Activated CD8-positive, alpha-beta T cell treated with anti-CD3 and anti-CD28 coated beads for 36 hours (primary cell): ENCODE measurements at regions of chr1 and their contacts with region 1.

Region 1: GRCh38 chr1:116769561-116769977 is 15.3 kb downstream of the CD2 start:
- DNase-seq: peak; percentile 89
- ATAC-seq: peak; percentile 56
- H3K4me3 Mint-ChIP-seq: peak overlapping the region; percentile 98
- H3K27ac Mint-ChIP-seq: peak overlapping the region; percentile 99
- H3K4me1 Mint-ChIP-seq: peaks cover 92% of the 10 kb centered on the region
- H3K27me3 Mint-ChIP-seq: no peaks in the 10 kb centered on the region
- CTCF ChIP-seq: no peak

Region 2: DNA sequence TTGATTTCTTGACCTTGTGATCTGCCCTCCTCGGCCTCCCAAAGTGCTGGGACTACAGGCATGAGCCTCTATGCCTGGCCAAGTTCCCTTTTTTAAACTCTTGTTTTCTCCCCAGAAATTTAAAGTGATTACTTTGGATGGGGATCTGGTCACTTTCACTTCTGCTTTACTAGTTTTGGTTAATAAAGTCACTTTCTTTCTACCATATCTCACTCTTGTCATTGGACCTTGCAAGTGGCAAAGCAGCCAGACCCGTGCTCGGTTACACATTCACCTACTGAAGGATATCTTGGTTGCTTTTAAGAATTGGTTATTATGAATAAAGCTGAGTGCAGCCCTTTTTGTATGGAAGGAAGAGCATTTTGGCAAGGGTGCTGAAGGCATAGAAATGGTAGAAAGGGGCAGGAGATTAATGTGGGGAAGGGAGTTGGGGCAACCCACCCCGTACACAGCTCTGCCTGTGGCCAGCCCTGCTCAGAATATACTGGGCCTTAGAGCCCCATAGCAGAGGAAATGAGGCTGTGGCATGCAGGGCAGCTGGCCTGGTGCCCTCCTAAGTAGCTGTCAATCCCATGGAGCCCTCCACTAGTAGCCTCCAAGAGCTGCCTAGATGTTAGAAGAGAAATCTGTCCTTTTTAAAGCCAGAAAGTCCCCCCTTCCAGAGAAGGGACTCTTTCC is 25.4 kb after region 1 on chr1:
- CTCF ChIA-PET with region 1: interaction called, 5 read pairs
- POLR2A ChIA-PET with region 1: interaction called, 520 read pairs
- intact Hi-C with region 1: no loop called
- DNase-seq: no peak
- ATAC-seq: no peak
- H3K4me3 Mint-ChIP-seq: no peak overlapping the region
- H3K27ac Mint-ChIP-seq: peak overlapping the region; percentile 11
- H3K4me1 Mint-ChIP-seq: peaks cover 63% of the 10 kb centered on the region
- H3K27me3 Mint-ChIP-seq: no peaks in the 10 kb centered on the region
- CTCF ChIP-seq: no peak

Region 3: DNA sequence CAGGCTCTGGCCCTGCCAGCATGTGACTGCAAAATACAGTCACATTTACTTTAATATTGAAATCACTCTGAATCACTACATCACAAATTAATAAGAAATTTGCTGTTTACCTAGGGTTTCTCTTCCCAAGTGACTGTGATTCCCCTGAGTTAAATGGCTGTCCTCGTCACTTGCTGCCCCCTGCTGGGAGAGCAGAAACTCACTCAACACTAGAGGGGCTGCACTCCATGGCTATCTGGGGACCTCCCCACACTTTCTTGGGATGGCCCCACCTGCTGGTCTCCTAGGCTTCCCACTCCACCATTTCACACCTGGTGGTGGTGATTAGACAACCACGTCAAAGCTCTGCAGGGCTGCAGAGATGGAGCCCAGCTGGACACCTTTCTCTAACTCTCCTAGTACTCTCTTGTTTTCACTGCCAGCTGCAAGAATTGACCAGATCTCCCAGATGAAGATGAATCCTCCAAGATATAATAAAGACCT is 48.1 kb after region 1 on chr1:
- CTCF ChIA-PET with region 1: interaction called, 167 read pairs
- POLR2A ChIA-PET with region 1: interaction called, 217 read pairs
- intact Hi-C with region 1: loop called (anchors 1 kb)
- DNase-seq: peak; percentile 80
- ATAC-seq: peak; percentile 67
- H3K4me3 Mint-ChIP-seq: peak overlapping the region; percentile 52
- H3K27ac Mint-ChIP-seq: peak overlapping the region; percentile 96
- H3K4me1 Mint-ChIP-seq: peaks cover 52% of the 10 kb centered on the region
- H3K27me3 Mint-ChIP-seq: no peaks in the 10 kb centered on the region
- CTCF ChIP-seq: peak; percentile 95

Region 4: GRCh38 chr1:116826818-116827606 is 57.4 kb after region 1 on chr1:
- CTCF ChIA-PET with region 1: interaction called, 20 read pairs
- POLR2A ChIA-PET with region 1: interaction called, 139 read pairs
- intact Hi-C with region 1: no loop called
- DNase-seq: peak; percentile 90
- ATAC-seq: peak; percentile 91
- H3K4me3 Mint-ChIP-seq: peak overlapping the region; percentile 76
- H3K27ac Mint-ChIP-seq: peak overlapping the region; percentile 97
- H3K4me1 Mint-ChIP-seq: peaks cover 55% of the 10 kb centered on the region
- H3K27me3 Mint-ChIP-seq: no peaks in the 10 kb centered on the region
- CTCF ChIP-seq: no peak

Region 5: DNA sequence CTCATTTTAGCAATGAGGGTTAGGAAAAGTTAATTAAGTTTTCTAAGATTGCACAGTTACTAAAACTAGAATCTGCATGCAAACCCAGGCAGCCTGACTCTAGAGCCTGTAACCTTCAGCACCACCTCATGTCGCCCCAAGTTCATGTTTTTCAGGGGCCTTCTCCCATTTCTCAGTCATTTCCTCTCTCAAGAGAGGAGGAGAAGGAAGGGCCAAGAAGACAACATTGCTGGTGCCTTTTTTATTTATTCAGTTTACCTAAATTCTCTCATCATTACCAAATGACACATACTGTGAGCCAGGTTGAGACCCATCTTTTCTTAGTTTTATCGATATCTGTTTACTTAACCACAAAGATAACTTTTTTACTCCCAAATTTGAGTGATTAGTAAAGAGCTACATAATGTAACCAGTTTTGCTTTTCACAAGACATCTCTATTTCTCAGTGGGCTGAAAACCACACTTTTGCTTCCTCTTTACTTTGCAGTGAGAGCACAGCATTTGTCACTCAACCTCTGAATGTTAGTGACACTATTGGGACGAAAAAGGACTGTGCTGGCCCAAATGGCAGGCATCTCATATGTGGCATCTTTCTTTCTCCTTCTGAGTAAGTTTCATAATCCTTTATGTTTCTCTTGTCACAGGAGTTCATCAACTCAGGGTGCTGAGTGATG is 231.8 kb after region 1 on chr1 and contains the start of gene CD101:
- CTCF ChIA-PET with region 1: no interaction called
- POLR2A ChIA-PET with region 1: interaction called, 3 read pairs
- intact Hi-C with region 1: loop called (anchors 5 kb)
- DNase-seq: peak; percentile 64
- ATAC-seq: peak; percentile 91
- H3K4me3 Mint-ChIP-seq: peak within 1 kb of the TSS; percentile 52
- H3K27ac Mint-ChIP-seq: peak within 1 kb of the TSS; percentile 89
- H3K4me1 Mint-ChIP-seq: peaks cover 59% of the 10 kb centered on the region
- H3K27me3 Mint-ChIP-seq: no peaks in the 10 kb centered on the region
- CTCF ChIP-seq: no peak
- total RNA-seq, gene CD101: 2.5 to 3.2 TPM